ENCODE measurements at regions of chr16 and their contacts with region 1.

Region 1: DNA sequence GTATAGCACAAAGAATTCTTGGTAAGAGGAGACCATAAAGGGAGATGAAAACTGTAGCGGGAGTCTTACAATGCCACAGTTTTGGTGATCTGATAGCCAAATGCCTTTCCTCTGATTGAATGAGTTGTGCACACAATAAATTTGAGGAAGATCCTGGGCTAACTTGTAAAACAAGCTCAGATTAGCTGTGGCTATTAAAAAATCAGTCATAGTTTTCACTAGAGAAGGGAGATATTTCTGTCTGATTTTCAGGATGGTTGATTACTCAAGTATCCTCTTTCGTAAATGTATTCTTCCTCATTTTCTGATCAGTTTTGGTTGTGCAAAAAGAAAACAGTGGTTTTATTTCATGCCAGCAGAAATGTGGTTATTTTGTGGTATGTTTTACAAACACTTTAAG is 9.1 kb upstream of the METTL9 start:
- DNase-seq: no peak
- H3K4me3 ChIP-seq: no peak overlapping the region
- H3K27ac ChIP-seq: no peak overlapping the region
- H3K27me3 ChIP-seq: peaks cover 3% of the 10 kb centered on the region
- CTCF ChIP-seq: no peak

Region 2: DNA sequence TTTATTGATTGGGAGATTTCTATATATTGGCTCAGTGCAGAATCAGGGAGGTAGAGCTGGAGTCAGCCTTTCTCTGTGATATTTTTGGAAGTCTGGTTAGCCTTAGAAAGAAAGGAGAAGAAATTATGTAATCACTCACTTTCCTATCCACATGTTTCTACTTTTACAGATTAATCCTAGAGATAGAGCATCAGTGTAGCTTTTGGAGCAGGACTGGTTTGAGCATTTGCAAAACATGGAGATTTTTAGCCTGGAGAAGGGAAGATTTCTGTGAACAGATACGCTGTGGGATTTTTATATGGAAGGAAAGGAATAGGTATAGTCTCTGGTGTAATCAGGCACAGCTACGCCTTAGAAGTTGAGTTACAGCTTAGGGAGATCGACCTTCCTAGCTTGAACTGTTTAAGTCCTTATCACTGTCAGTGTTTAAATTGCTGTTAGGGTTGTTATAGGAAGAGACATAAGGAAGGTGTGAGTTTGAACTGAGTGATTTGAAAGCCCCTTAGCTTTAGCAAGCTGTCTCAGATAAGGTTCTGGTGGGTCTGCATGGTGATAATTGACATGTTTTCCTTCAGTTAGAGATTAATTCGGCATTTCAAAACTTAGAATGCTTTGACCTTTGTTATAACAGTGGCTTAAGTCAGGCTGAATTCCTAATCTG is 29.6 kb after region 1 on chr16:
- CTCF ChIA-PET with region 1: no interaction called
- POLR2A ChIA-PET with region 1: interaction called, 10 read pairs
- DNase-seq: no peak
- H3K4me3 ChIP-seq: no peak overlapping the region
- H3K27ac ChIP-seq: no peak overlapping the region
- H3K27me3 ChIP-seq: no peaks in the 10 kb centered on the region
- CTCF ChIP-seq: no peak

Region 3: GRCh38 chr16:21641916-21642315 is 51.6 kb after region 1 on chr16:
- CTCF ChIA-PET with region 1: interaction called, 12 read pairs
- POLR2A ChIA-PET with region 1: no interaction called
- DNase-seq: no peak
- H3K4me3 ChIP-seq: no peak overlapping the region
- H3K27ac ChIP-seq: no peak overlapping the region
- H3K27me3 ChIP-seq: no peaks in the 10 kb centered on the region
- CTCF ChIP-seq: no peak

Region 4: GRCh38 chr16:21719283-21719682 is 129.0 kb after region 1 on chr16:
- CTCF ChIA-PET with region 1: no interaction called
- POLR2A ChIA-PET with region 1: no interaction called
- DNase-seq: no peak
- H3K4me3 ChIP-seq: no peak overlapping the region
- H3K27ac ChIP-seq: no peak overlapping the region
- H3K27me3 ChIP-seq: peaks cover 6% of the 10 kb centered on the region
- CTCF ChIP-seq: no peak